ENCODE measurements at regions of chr4 and their contacts with region 1.

Region 1: DNA sequence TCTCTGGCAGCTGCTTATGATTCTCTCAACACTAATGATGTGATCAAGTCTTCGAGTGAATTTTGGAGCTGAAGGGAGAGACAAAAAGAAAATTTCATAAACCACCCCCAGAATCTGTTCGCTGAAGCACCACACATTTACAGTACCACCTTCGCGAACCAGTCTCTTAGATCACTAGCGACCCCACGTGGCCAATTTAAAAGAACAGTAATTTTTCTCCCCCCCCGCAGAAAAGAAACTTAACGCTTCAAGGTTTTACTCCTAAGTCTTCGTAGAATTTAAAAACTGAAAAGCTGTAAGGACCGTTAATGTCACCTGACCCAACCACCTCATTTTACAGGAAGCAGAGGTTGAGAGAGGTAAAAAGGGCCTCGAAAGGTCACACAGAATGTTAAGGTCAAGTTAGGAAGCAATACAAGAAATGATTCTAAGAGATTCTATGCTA is 187.5 kb downstream of the QDPR start:
- DNase-seq: peak; percentile 69
- H3K4me3 ChIP-seq: no peak overlapping the region
- H3K27ac ChIP-seq: no peak overlapping the region
- H3K4me1 ChIP-seq: peaks cover 29% of the 10 kb centered on the region
- CTCF ChIP-seq: peak; percentile 90

Region 2: GRCh38 chr4:16794816-16795445 is 529.5 kb before region 1 on chr4:
- CTCF ChIA-PET with region 1: no interaction called
- POLR2A ChIA-PET with region 1: no interaction called
- intact Hi-C with region 1: loop called (anchors 5 kb)
- DNase-seq: peak; percentile 37
- H3K4me3 ChIP-seq: no peak overlapping the region
- H3K27ac ChIP-seq: no peak overlapping the region
- H3K4me1 ChIP-seq: no peaks in the 10 kb centered on the region
- CTCF ChIP-seq: peak; percentile 86

Region 3: DNA sequence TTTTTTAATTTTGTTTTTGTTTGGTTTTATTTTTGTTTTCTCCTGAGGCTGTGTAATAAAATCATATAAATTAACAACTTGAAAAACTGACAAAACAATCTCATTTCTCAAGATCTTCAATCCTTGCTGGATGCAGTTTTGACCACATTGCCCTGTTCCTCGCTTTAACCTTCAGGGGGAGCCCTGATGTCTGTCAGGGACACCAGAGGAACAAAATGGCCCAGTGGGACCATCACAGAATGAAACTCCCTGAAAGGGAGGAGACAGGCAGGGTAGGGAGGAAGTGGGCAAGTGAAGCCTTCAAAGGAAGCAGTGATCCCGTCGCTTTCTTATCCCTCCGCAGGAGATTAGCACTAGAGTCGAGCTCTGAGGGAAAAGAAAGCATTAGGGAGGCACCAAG is 151.1 kb before region 1 on chr4:
- CTCF ChIA-PET with region 1: no interaction called
- POLR2A ChIA-PET with region 1: interaction called, 3 read pairs
- intact Hi-C with region 1: loop called (anchors 1 kb)
- DNase-seq: peak; percentile 10
- H3K4me3 ChIP-seq: no peak overlapping the region
- H3K27ac ChIP-seq: no peak overlapping the region
- H3K4me1 ChIP-seq: no peaks in the 10 kb centered on the region
- CTCF ChIP-seq: peak; percentile 60

Region 4: GRCh38 chr4:17336524-17336961 is 12.1 kb after region 1 on chr4:
- CTCF ChIA-PET with region 1: interaction called, 3 read pairs
- POLR2A ChIA-PET with region 1: interaction called, 20 read pairs
- intact Hi-C with region 1: no loop called
- DNase-seq: peak; percentile 95
- H3K4me3 ChIP-seq: peak overlapping the region; percentile 50
- H3K27ac ChIP-seq: peak overlapping the region; percentile 92
- H3K4me1 ChIP-seq: peaks cover 81% of the 10 kb centered on the region
- CTCF ChIP-seq: no peak